Right cardiac atrium (tissue), 5 donors: ENCODE measurements at regions of chr11 and their contacts with region 1.

Region 1: GRCh38 chr11:18939314-18939713 is at the start of gene MRGPRX1:
- DNase-seq: no peak
- ATAC-seq: no peak
- H3K4me3 ChIP-seq: no peak within 1 kb of the TSS
- H3K27ac ChIP-seq: no peak within 1 kb of the TSS
- H3K4me1 ChIP-seq: no peaks in the 10 kb centered on the region
- H3K27me3 ChIP-seq: no peaks in the 10 kb centered on the region
- total RNA-seq, gene MRGPRX1: not detected

Region 2: GRCh38 chr11:18927550-18928322 is 11.6 kb before region 1 on chr11:
- intact Hi-C with region 1: loop called in 1 of 4 experiments (anchors 2 kb)
- DNase-seq: no peak
- ATAC-seq: no peak
- H3K4me3 ChIP-seq: no peak overlapping the region
- H3K27ac ChIP-seq: no peak overlapping the region
- H3K4me1 ChIP-seq: no peaks in the 10 kb centered on the region
- H3K27me3 ChIP-seq: no peaks in the 10 kb centered on the region